Breast epithelium (tissue), 4 donors: ENCODE measurements at regions of chr5 and their contacts with region 1.

Region 1: GRCh38 chr5:7518947-7519560 is 123.1 kb downstream of the ADCY2 start:
- DNase-seq: no peak
- H3K4me3 ChIP-seq: no peak overlapping the region
- H3K27ac ChIP-seq: no peak overlapping the region
- H3K4me1 ChIP-seq: no peaks in the 10 kb centered on the region
- H3K27me3 ChIP-seq: no peaks in the 10 kb centered on the region
- CTCF ChIP-seq: no peak
- POLR2A ChIP-seq: no peak

Region 2: GRCh38 chr5:6792911-6793471 is 726.1 kb before region 1 on chr5:
- intact Hi-C with region 1: loop called (anchors 5 kb)
- DNase-seq: no peak
- H3K4me3 ChIP-seq: no peak overlapping the region
- H3K27ac ChIP-seq: no peak overlapping the region
- H3K4me1 ChIP-seq: no peaks in the 10 kb centered on the region
- H3K27me3 ChIP-seq: no peaks in the 10 kb centered on the region
- CTCF ChIP-seq: no peak
- POLR2A ChIP-seq: no peak

Region 3: GRCh38 chr5:7317751-7318150 is 201.3 kb before region 1 on chr5:
- intact Hi-C with region 1: no loop called
- DNase-seq: no peak
- H3K4me3 ChIP-seq: no peak overlapping the region
- H3K27ac ChIP-seq: no peak overlapping the region
- H3K4me1 ChIP-seq: no peaks in the 10 kb centered on the region
- H3K27me3 ChIP-seq: no peaks in the 10 kb centered on the region
- CTCF ChIP-seq: no peak
- POLR2A ChIP-seq: no peak

Region 4: DNA sequence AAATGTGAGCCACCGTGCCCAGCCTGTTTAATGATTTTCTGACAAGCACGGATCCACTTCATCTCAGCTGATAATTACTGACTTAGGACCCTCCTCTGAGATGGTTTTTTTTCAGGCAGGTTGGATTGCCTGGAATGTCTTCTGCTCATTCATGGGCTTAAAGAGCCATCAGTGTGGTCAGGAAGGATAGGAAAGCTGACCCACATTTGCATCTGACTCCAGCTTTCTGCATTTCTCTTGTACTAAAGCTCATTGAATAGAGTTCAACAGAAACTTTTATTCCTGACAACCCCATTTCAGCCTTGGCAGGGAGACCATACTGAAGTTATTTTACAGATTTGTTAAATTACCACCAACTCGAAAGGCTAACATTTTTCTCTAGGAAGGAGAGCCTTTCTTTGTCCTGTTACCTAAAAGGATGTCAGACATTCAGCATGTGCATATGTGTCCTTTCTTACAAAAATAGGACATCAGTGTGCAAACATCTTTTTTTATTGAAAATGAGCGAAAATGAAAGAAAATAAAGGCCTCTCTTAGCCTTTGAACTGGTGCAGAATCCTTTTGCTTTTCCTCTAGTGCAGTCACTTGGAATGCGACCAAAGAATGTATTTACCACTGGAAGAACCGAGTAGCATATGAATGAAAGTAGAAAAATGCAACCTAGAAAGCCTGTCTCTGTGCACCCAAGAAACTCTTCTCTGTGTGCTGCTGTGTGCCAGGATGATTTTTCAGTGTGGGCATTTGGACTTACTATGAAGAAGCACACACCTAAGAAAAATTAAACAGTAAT is 96.5 kb before region 1 on chr5:
- intact Hi-C with region 1: no loop called
- DNase-seq: no peak
- H3K4me3 ChIP-seq: no peak overlapping the region
- H3K27ac ChIP-seq: no peak overlapping the region
- H3K4me1 ChIP-seq: no peaks in the 10 kb centered on the region
- H3K27me3 ChIP-seq: no peaks in the 10 kb centered on the region
- CTCF ChIP-seq: no peak
- POLR2A ChIP-seq: no peak